HCT116 (cell line): ENCODE measurements at regions of chr7 and their contacts with region 1.

Region 1: GRCh38 chr7:106153891-106154449 is 41.9 kb upstream of the SYPL1 start:
- DNase-seq: peak; percentile 57
- ATAC-seq: peak; percentile 100
- H3K4me3 ChIP-seq: no peak overlapping the region
- H3K27ac ChIP-seq: no peak overlapping the region
- H3K4me1 ChIP-seq: peaks cover 0 to 8% of the 10 kb centered on the region in 2 experiments; a peak in 1 of 4 replicates
- H3K27me3 ChIP-seq: 0 out of 2 replicates have a peak, but pooled peaks cover 3% of the 10 kb centered on the region
- CTCF ChIP-seq: peak; percentile 90 to 95 (median 92)
- POLR2A ChIP-seq: no peak
- RAD21 ChIP-seq: peak; percentile 99

Region 2: GRCh38 chr7:106064771-106065585 is 89.0 kb before region 1 on chr7:
- CTCF ChIA-PET with region 1: interaction called, 14 read pairs
- POLR2A ChIA-PET with region 1: interaction called, 5 read pairs
- RAD21 ChIA-PET with region 1: no interaction called
- intact Hi-C with region 1: no loop called
- DNase-seq: peak; percentile 82
- ATAC-seq: peak; percentile 95
- H3K4me3 ChIP-seq: peak overlapping the region; percentile 22 to 49
- H3K27ac ChIP-seq: peak overlapping the region; percentile 55
- H3K4me1 ChIP-seq: peaks cover 15 to 40% of the 10 kb centered on the region in 2 experiments
- H3K27me3 ChIP-seq: no peaks in the 10 kb centered on the region
- CTCF ChIP-seq: 0 out of 6 replicates have a peak, but pooled peaks of 1 of the 3 experiments have one; percentile 4
- POLR2A ChIP-seq: peak; percentile 35
- RAD21 ChIP-seq: no peak; the same call in 1 of the 2 replicates